CD8-positive, alpha-beta memory T cell (primary cell): ENCODE measurements at regions of chr10 and their contacts with region 1.

Region 1: DNA sequence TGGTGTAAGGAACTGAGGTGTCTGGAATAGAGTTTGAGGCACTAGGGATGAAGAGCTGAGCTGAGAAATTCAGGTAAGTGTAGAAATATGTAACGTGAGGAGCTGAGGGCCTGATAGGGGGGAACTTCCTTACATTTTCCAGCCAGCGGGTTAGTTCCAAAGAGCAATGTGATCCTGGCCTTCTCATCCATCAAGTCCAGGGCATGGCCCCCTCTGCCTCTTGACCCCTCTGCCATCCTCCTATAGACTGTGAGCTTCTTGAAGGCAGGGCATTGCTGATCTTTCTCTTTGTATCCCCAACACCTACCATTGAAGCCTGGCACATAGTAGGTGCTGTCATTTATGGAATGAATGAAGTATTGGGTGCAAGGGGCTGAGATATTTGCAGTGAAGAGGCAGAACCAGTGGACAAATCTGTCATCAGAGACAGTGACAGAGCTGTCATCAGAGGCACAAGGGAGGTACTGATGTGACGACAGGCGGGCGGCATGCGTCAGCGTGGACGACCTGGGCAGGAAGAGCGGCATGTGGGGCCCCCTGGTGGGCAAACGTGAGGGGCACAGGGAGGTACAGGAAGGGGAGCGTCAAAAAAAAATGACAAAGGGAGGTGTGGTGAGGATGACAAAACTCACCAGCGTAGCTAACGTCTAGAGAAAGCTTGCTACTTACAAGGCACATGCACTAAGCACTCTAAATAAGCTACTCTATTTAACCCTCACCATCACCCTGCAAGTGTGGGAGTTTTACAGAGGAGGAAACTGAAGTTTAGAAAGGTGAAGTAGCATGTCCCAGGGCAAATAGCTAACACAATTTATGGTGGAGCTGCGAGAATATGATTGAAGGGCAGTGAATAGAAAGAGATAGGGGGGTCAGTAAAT is 5.2 kb upstream of the CAMK2G start:
- DNase-seq: peak; percentile 87 to 96 (median 93)
- H3K4me3 ChIP-seq: no peak overlapping the region
- H3K4me3 Mint-ChIP-seq: peak overlapping the region in 1 of 7 donors; percentile 7
- H3K27ac ChIP-seq: no peak overlapping the region
- H3K27ac Mint-ChIP-seq: peak overlapping the region; percentile 51 to 97 (median 86)
- H3K4me1 ChIP-seq: peaks cover 28% of the 10 kb centered on the region
- H3K4me1 Mint-ChIP-seq: peaks cover 21 to 44% (median 23%) of the 10 kb centered on the region in 3 donors
- H3K27me3 ChIP-seq: no peaks in the 10 kb centered on the region
- H3K27me3 Mint-ChIP-seq: peaks cover 0 to 3% of the 10 kb centered on the region in 2 donors

Region 2: GRCh38 chr10:73577788-73578187 is 301.7 kb before region 1 on chr10:
- CTCF ChIA-PET with region 1: no interaction called
- POLR2A ChIA-PET with region 1: no interaction called
- DNase-seq: no peak
- H3K4me3 ChIP-seq: no peak overlapping the region
- H3K4me3 Mint-ChIP-seq: no peak overlapping the region
- H3K27ac ChIP-seq: no peak overlapping the region
- H3K27ac Mint-ChIP-seq: peak overlapping the region in 1 of 8 donors; percentile 26
- H3K4me1 ChIP-seq: no peaks in the 10 kb centered on the region
- H3K4me1 Mint-ChIP-seq: no peaks in the 10 kb centered on the region
- H3K27me3 ChIP-seq: no peaks in the 10 kb centered on the region
- H3K27me3 Mint-ChIP-seq: no peaks in the 10 kb centered on the region

Region 3: GRCh38 chr10:73591935-73592699 is 287.4 kb before region 1 on chr10:
- CTCF ChIA-PET with region 1: no interaction called
- POLR2A ChIA-PET with region 1: no interaction called
- DNase-seq: no peak
- H3K4me3 ChIP-seq: no peak overlapping the region
- H3K4me3 Mint-ChIP-seq: peak overlapping the region in 5 of 7 donors; percentile 19 to 45 (median 30)
- H3K27ac ChIP-seq: peak overlapping the region; percentile 65
- H3K27ac Mint-ChIP-seq: peak overlapping the region in 6 of 8 donors; percentile 31 to 77 (median 48)
- H3K4me1 ChIP-seq: peaks cover 25% of the 10 kb centered on the region
- H3K4me1 Mint-ChIP-seq: peaks cover 16 to 24% (median 21%) of the 10 kb centered on the region in 3 donors
- H3K27me3 ChIP-seq: no peaks in the 10 kb centered on the region
- H3K27me3 Mint-ChIP-seq: no peaks in the 10 kb centered on the region

Region 4: GRCh38 chr10:73772280-73773151 is 107.0 kb before region 1 on chr10:
- CTCF ChIA-PET with region 1: interaction called, 24 read pairs
- POLR2A ChIA-PET with region 1: interaction called, 7 read pairs
- DNase-seq: peak; percentile 72 to 88 (median 82)
- H3K4me3 ChIP-seq: peak overlapping the region; percentile 92
- H3K4me3 Mint-ChIP-seq: peak overlapping the region; percentile 91 to 98 (median 97)
- H3K27ac ChIP-seq: peak overlapping the region; percentile 90
- H3K27ac Mint-ChIP-seq: peak overlapping the region; percentile 87 to 97 (median 94)
- H3K4me1 ChIP-seq: peaks cover 45% of the 10 kb centered on the region
- H3K4me1 Mint-ChIP-seq: peaks cover 50 to 75% (median 64%) of the 10 kb centered on the region in 3 donors
- H3K27me3 ChIP-seq: no peaks in the 10 kb centered on the region
- H3K27me3 Mint-ChIP-seq: peaks cover 0 to 4% of the 10 kb centered on the region in 2 donors

Region 5: GRCh38 chr10:73837072-73837471 is 42.5 kb before region 1 on chr10:
- CTCF ChIA-PET with region 1: interaction called, 289 read pairs
- POLR2A ChIA-PET with region 1: no interaction called
- DNase-seq: no peak
- H3K4me3 ChIP-seq: no peak overlapping the region
- H3K4me3 Mint-ChIP-seq: no peak overlapping the region
- H3K27ac ChIP-seq: no peak overlapping the region
- H3K27ac Mint-ChIP-seq: peak overlapping the region in 3 of 8 donors; percentile 11 to 66 (median 17)
- H3K4me1 ChIP-seq: no peaks in the 10 kb centered on the region
- H3K4me1 Mint-ChIP-seq: no peaks in the 10 kb centered on the region
- H3K27me3 ChIP-seq: no peaks in the 10 kb centered on the region
- H3K27me3 Mint-ChIP-seq: no peaks in the 10 kb centered on the region

Region 6: DNA sequence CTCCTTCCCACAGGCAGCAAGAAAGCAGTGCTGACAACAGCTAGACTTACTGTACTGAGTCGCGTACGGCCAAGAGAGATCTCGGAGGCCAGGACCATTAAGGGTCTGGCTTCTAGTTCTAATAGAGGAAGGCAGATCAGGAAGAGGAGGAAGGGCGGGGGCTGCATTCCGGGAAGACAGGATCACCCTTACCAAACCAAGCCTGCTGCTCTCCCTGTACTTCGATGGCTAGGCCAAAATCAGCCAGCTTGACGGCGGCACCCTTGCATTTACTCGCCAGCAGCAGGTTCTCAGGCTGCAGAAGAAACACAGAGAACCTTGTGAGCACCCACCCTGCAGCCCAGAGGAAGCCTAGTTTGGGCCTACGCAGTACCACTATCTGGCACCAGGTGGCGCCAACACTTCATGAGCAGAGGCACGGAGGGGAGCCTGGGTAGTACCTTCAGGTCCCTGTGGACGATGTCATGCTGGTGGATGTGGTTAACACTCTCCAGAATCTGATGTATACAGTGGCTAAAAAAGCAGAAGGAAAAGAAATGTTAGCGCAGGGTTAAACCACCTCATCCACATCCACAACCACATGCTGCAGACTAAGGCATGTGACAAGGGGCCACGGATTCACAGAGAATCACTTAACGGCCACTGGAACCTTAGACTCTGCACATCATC is 30.6 kb before region 1 on chr10:
- CTCF ChIA-PET with region 1: interaction called, 289 read pairs
- POLR2A ChIA-PET with region 1: interaction called, 16 read pairs
- DNase-seq: peak; percentile 84 to 92 (median 88)
- H3K4me3 ChIP-seq: no peak overlapping the region
- H3K4me3 Mint-ChIP-seq: peak overlapping the region in 6 of 7 donors; percentile 22 to 76 (median 64)
- H3K27ac ChIP-seq: no peak overlapping the region
- H3K27ac Mint-ChIP-seq: peak overlapping the region; percentile 71 to 94 (median 92)
- H3K4me1 ChIP-seq: peaks cover 16% of the 10 kb centered on the region
- H3K4me1 Mint-ChIP-seq: peaks cover 17 to 21% (median 21%) of the 10 kb centered on the region in 3 donors
- H3K27me3 ChIP-seq: no peaks in the 10 kb centered on the region
- H3K27me3 Mint-ChIP-seq: no peaks in the 10 kb centered on the region

Region 7: DNA sequence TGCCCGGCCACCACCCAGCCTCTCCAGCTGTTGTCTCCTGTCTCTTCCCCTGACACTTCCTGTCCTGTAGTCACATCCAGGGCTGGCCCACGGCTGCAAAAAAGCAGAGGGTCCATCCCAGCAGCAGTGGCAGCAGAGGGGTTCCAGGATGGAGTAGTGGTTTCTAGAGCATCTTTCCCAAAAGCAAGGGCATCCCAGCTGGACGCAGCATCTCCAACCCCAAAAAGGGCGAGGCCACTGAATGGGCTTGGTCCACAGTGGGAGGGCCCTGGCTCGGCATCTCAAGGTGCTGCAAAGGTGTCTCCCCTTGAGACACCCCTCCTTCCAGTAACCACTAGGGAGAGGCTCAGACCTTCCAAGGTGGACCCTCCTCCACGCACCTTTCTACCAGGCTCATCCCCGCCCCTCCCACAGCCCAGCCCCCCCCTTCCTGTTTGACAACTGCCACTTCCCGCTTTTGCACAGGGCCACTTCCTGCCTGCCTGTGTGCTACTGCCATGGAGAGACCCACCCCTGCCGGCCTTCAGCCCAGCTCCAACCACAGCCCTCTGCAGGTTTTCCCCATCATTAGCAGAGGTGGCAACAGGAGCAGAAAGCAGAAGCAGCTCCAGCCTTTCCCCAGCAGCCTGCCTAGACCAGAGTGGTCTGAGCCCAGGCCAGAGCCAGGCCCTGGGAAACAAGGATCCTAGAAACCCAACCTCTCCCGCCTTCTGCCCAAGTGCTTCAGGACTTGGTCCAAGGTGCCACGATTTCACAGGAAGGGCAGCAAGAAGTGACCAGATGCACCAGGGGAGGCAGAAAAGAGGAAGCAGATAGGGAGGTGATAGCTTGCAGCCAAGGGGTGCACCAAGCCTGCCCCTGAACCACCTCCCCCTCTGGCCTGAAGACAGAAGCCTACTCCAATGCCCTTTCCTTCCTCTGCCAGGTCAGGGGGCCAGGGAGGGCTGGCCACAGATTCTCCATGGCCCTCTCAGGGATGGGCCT is 13.8 kb before region 1 on chr10:
- CTCF ChIA-PET with region 1: interaction called, 201 read pairs
- POLR2A ChIA-PET with region 1: interaction called, 6 read pairs
- DNase-seq: peak; percentile 37 to 68 (median 44)
- H3K4me3 ChIP-seq: peak overlapping the region; percentile 71
- H3K4me3 Mint-ChIP-seq: peak overlapping the region; percentile 80 to 91 (median 85)
- H3K27ac ChIP-seq: peak overlapping the region; percentile 49
- H3K27ac Mint-ChIP-seq: peak overlapping the region; percentile 90 to 99 (median 96)
- H3K4me1 ChIP-seq: peaks cover 76% of the 10 kb centered on the region
- H3K4me1 Mint-ChIP-seq: peaks cover 74 to 94% (median 83%) of the 10 kb centered on the region in 3 donors
- H3K27me3 ChIP-seq: no peaks in the 10 kb centered on the region
- H3K27me3 Mint-ChIP-seq: no peaks in the 10 kb centered on the region

Region 8: GRCh38 chr10:73956476-73957359 is 77.2 kb after region 1 on chr10:
- CTCF ChIA-PET with region 1: interaction called, 14 read pairs
- POLR2A ChIA-PET with region 1: no interaction called
- DNase-seq: peak; percentile 10 to 68 (median 38)
- H3K4me3 ChIP-seq: peak overlapping the region; percentile 46
- H3K4me3 Mint-ChIP-seq: peak overlapping the region; percentile 69 to 95 (median 84)
- H3K27ac ChIP-seq: peak overlapping the region; percentile 67
- H3K27ac Mint-ChIP-seq: peak overlapping the region; percentile 67 to 98 (median 94)
- H3K4me1 ChIP-seq: peaks cover 51% of the 10 kb centered on the region
- H3K4me1 Mint-ChIP-seq: peaks cover 44 to 66% (median 65%) of the 10 kb centered on the region in 3 donors
- H3K27me3 ChIP-seq: no peaks in the 10 kb centered on the region
- H3K27me3 Mint-ChIP-seq: no peaks in the 10 kb centered on the region

Region 9: GRCh38 chr10:74081192-74081803 is 201.8 kb after region 1 on chr10:
- CTCF ChIA-PET with region 1: interaction called, 14 read pairs
- POLR2A ChIA-PET with region 1: no interaction called
- DNase-seq: peak in 4 of 5 donors; percentile 10 to 53 (median 26)
- H3K4me3 ChIP-seq: no peak overlapping the region
- H3K4me3 Mint-ChIP-seq: no peak overlapping the region
- H3K27ac ChIP-seq: no peak overlapping the region
- H3K27ac Mint-ChIP-seq: peak overlapping the region in 4 of 8 donors; percentile 8 to 74 (median 21)
- H3K4me1 ChIP-seq: peaks cover 12% of the 10 kb centered on the region
- H3K4me1 Mint-ChIP-seq: peaks cover 34 to 47% (median 39%) of the 10 kb centered on the region in 3 donors
- H3K27me3 ChIP-seq: no peaks in the 10 kb centered on the region
- H3K27me3 Mint-ChIP-seq: no peaks in the 10 kb centered on the region